ENCODE measurements at regions of chr1 and their contacts with region 1.

Region 1: GRCh38 chr1:156876281-156876680 is 15.6 kb downstream of the NTRK1 start:
- DNase-seq: peak; percentile 46 to 78
- H3K4me3 ChIP-seq: no peak overlapping the region
- H3K27ac ChIP-seq: no peak overlapping the region
- H3K4me1 ChIP-seq: peaks cover 0 to 4% (median 1%) of the 10 kb centered on the region in 4 experiments; a peak in 4 of 7 replicates
- H3K27me3 ChIP-seq: peaks cover 0 to 41% (median 17%) of the 10 kb centered on the region in 4 experiments; a peak in 6 of 7 replicates
- CTCF ChIP-seq: peak; percentile 56 to 76 (median 75)
- EP300 ChIP-seq: no peak
- POLR2A ChIP-seq: no peak
- RAD21 ChIP-seq: peak; percentile 21 to 39; a peak in 2 of 4 replicates

Region 2: GRCh38 chr1:156641761-156642264 is 234.5 kb before region 1 on chr1 and contains the start of gene BCAN:
- CTCF ChIA-PET with region 1: no interaction called
- POLR2A ChIA-PET with region 1: no interaction called
- DNase-seq: peak in 1 of 2 experiments; percentile 80
- H3K4me3 ChIP-seq: peak within 1 kb of the TSS; percentile 26 to 72 (median 53)
- H3K27ac ChIP-seq: no peak within 1 kb of the TSS
- H3K4me1 ChIP-seq: peaks cover 5 to 22% (median 15%) of the 10 kb centered on the region in 4 experiments
- H3K27me3 ChIP-seq: peaks cover 11 to 83% (median 63%) of the 10 kb centered on the region in 4 experiments
- CTCF ChIP-seq: no peak
- EP300 ChIP-seq: no peak
- POLR2A ChIP-seq: no peak
- RAD21 ChIP-seq: no peak
- total RNA-seq, gene BCAN: 3.8 and 4.5 TPM in 2 replicates

Region 3: DNA sequence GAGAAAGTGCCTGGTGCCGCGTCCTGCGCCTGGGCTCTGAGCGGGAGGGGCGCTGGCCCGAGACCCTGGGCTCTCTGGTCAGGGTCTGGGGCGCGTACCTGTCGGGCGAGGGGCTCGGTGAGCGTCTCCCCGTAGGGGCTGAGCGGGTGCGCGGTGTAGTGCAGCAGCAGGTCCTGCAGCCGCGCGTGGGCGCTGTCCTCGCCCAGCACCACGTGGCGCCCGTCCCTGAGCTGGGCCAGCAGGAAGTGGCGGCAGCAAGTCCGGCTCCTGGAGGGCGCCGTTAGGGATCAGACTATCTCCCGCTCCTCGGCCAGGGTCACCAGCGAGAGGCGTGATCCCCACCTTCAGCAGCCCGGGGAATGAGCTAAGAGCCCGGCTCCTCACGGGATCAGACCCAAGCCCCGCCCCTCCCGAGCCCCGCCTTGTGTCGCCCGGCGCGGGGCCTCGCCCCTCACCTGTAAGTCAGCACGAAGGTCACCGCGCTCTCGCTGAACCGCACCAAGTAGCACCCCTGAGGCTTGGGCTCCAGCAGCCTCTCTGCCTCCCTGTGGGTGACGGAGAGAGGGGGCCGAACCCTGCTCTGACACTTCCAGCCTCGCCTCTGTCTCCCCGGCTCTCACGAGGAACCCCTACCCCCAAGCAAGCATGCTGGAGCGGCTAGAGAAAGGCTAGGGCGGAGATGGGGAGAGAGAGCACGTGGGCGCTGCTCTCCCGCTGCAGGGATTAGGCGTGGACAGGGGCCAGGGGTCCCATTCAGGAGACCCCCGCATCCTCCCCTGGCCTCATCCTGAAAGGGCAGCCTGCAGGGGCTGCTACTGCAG is 62.3 kb before region 1 on chr1:
- CTCF ChIA-PET with region 1: interaction called, 11 read pairs
- POLR2A ChIA-PET with region 1: no interaction called
- DNase-seq: peak; percentile 68 to 91
- H3K4me3 ChIP-seq: peak overlapping the region; percentile 3 to 55 (median 38)
- H3K27ac ChIP-seq: no peak overlapping the region
- H3K4me1 ChIP-seq: peaks cover 0 to 11% (median 5%) of the 10 kb centered on the region in 4 experiments; a peak in 6 of 7 replicates
- H3K27me3 ChIP-seq: peaks cover 1 to 48% (median 42%) of the 10 kb centered on the region in 4 experiments
- CTCF ChIP-seq: peak; percentile 37 to 70 (median 59); a peak in 3 of 4 replicates
- EP300 ChIP-seq: no peak
- POLR2A ChIP-seq: peak in 1 of 2 experiments; percentile 75; a peak in 2 of 3 replicates
- RAD21 ChIP-seq: peak in 1 of 2 experiments; percentile 14; a peak in 1 of 4 replicates

Region 4: DNA sequence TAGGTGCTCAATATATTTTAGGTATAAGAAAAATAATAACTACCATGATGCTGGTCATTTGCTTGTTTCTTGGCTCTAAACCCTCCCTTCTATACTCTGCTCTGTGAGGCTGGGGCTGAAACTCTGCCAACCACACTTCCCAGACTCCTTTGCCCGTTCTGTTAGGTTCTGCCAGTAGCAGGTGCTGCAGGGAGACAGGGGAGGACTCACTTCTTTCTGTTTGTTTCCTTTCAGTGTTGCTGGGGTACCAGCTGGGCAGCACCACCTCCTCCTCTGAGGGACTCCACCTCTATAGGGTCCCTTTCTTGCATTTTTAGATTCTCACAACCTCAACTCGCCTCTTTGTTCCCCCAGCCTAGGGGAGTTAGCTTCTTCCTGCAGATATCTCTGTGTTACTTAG is 42.7 kb before region 1 on chr1:
- CTCF ChIA-PET with region 1: interaction called, 36 read pairs
- POLR2A ChIA-PET with region 1: no interaction called
- DNase-seq: no peak
- H3K4me3 ChIP-seq: no peak overlapping the region
- H3K27ac ChIP-seq: no peak overlapping the region
- H3K4me1 ChIP-seq: no peaks in the 10 kb centered on the region
- H3K27me3 ChIP-seq: peaks cover 0 to 14% (median 7%) of the 10 kb centered on the region in 4 experiments; a peak in 5 of 7 replicates
- CTCF ChIP-seq: no peak
- EP300 ChIP-seq: no peak
- POLR2A ChIP-seq: no peak
- RAD21 ChIP-seq: no peak

Region 5: GRCh38 chr1:156910309-156910782 is 34.1 kb after region 1 on chr1:
- CTCF ChIA-PET with region 1: interaction called, 22 read pairs
- POLR2A ChIA-PET with region 1: no interaction called
- DNase-seq: peak in 1 of 2 experiments; percentile 93
- H3K4me3 ChIP-seq: peak overlapping the region in 3 of 4 experiments; percentile 45 to 56 (median 49); a peak in 6 of 8 replicates
- H3K27ac ChIP-seq: no peak overlapping the region
- H3K4me1 ChIP-seq: peaks cover 2 to 12% (median 10%) of the 10 kb centered on the region in 4 experiments
- H3K27me3 ChIP-seq: peaks cover 0 to 15% (median 11%) of the 10 kb centered on the region in 4 experiments; a peak in 6 of 7 replicates
- CTCF ChIP-seq: peak in 2 of 3 experiments; percentile 72 to 74; a peak in 3 of 4 replicates
- EP300 ChIP-seq: no peak
- POLR2A ChIP-seq: no peak
- RAD21 ChIP-seq: peak; percentile 34 to 46

Region 6: GRCh38 chr1:156941655-156942054 is 65.4 kb after region 1 on chr1:
- CTCF ChIA-PET with region 1: no interaction called
- POLR2A ChIA-PET with region 1: no interaction called
- DNase-seq: no peak
- H3K4me3 ChIP-seq: no peak overlapping the region
- H3K27ac ChIP-seq: no peak overlapping the region
- H3K4me1 ChIP-seq: no peaks in the 10 kb centered on the region
- H3K27me3 ChIP-seq: no peaks in the 10 kb centered on the region
- CTCF ChIP-seq: no peak; a peak in 1 of 4 replicates
- EP300 ChIP-seq: no peak
- POLR2A ChIP-seq: no peak
- RAD21 ChIP-seq: no peak

Region 7: DNA sequence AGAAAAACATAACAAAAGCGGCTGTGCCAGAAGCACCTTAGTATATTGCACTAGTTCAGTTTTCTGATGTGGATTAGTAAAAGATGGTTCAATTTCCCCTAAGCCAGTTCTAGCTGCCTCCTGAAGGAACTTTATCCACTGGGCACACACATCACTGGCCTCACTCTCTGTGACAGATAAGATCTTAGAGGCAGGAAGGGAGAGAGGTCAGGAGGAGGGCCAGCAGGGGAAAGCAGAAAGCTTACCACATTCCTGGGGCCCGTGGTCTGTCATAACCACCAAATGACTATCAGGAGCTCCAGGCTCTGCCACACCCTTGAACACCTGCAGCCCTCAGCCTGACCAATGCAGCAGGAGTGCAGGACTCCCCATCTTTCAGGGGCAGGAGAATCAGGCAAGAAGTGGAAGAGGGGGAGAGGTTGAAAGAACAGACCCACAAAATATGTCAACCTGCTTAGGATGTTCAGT is 82.0 kb after region 1 on chr1:
- CTCF ChIA-PET with region 1: no interaction called
- POLR2A ChIA-PET with region 1: no interaction called
- DNase-seq: no peak
- H3K4me3 ChIP-seq: no peak overlapping the region
- H3K27ac ChIP-seq: no peak overlapping the region
- H3K4me1 ChIP-seq: no peaks in the 10 kb centered on the region
- H3K27me3 ChIP-seq: no peaks in the 10 kb centered on the region
- CTCF ChIP-seq: no peak
- EP300 ChIP-seq: no peak
- POLR2A ChIP-seq: no peak
- RAD21 ChIP-seq: no peak

Measured in H1 (cell line).